Heart left ventricle (tissue), 16 donors: ENCODE measurements at regions of chr7 and their contacts with region 1.

Region 1: DNA sequence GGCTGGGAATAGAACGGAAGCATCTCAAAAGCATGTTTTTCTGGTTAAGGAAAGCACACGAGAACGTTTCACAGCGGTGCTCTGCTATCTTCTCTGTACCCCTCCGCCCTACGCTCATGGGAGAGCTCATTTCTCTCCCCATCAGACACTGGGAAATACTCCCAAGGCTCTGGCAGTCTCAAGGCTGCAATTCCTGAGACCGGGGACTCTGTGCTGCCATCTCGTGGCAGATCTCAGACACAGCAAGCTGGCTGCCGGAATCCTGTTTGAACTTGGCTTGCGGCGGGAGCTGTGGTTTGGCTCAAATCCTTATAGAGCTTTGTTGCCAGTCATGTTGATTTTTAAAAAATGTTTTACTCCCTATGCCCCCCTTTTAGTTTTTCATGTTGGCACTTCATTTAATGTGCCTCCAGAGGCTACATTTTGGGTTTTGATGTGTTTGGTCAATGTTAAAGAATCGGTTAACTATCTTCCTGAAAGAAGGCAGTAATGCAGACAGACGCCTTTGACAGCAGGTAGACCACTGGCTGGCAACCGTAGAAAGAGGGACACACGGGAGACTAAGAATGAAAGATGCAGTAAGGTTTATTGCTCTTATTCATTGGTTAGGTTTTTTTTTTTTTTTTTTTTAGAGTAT is 27.6 kb downstream of the BMPER start:
- DNase-seq: peak; percentile 75 to 85 (median 76)
- ATAC-seq: peak; percentile 55 to 94 (median 88)
- H3K4me3 ChIP-seq: peak overlapping the region in 8 of 12 donors; percentile 16 to 46 (median 32)
- H3K27ac ChIP-seq: peak overlapping the region in 2 of 12 donors; percentile 39 to 43
- H3K4me1 ChIP-seq: peaks cover 0 to 7% (median 0%) of the 10 kb centered on the region in 12 donors
- H3K27me3 ChIP-seq: no peaks in the 10 kb centered on the region
- CTCF ChIP-seq: peak; percentile 92 to 98 (median 96)
- POLR2A ChIP-seq: no peak

Region 2: DNA sequence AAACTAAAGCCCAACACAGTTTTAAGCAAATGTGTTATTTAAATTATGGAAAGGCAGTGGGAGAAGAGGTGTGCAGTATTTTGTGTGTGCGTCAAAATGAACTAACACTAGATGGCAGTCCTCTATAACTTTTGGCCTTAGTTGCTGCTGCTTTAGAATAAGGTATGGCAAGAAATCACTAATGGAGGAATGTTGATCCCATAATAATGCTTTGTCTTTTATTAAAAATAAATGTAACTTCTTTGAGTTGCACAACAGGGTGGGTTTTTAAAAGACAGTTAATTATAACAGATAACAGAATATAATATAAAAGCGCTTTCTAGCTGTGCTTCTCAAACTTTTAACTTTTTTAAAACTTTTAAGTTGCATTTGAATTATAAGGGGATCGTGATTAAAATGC is 747.2 kb before region 1 on chr7:
- intact Hi-C with region 1: loop called in 5 of 10 experiments (anchors 5 to 10 kb)
- DNase-seq: no peak
- ATAC-seq: peak in 2 of 4 donors; percentile 49 to 51
- H3K4me3 ChIP-seq: no peak overlapping the region
- H3K27ac ChIP-seq: no peak overlapping the region
- H3K4me1 ChIP-seq: peaks cover 0 to 5% (median 0%) of the 10 kb centered on the region in 12 donors
- H3K27me3 ChIP-seq: no peaks in the 10 kb centered on the region
- CTCF ChIP-seq: peak; percentile 36 to 67 (median 57)
- POLR2A ChIP-seq: no peak

Region 3: GRCh38 chr7:33243319-33243881 is 689.5 kb before region 1 on chr7:
- intact Hi-C with region 1: loop called in 8 of 10 experiments (anchors 2 to 10 kb)
- DNase-seq: no peak
- ATAC-seq: peak in 2 of 4 donors; percentile 51 to 64
- H3K4me3 ChIP-seq: no peak overlapping the region
- H3K27ac ChIP-seq: no peak overlapping the region
- H3K4me1 ChIP-seq: peaks cover 0 to 2% (median 0%) of the 10 kb centered on the region in 12 donors
- H3K27me3 ChIP-seq: no peaks in the 10 kb centered on the region
- CTCF ChIP-seq: peak; percentile 31 to 78 (median 70)
- POLR2A ChIP-seq: no peak

Region 4: DNA sequence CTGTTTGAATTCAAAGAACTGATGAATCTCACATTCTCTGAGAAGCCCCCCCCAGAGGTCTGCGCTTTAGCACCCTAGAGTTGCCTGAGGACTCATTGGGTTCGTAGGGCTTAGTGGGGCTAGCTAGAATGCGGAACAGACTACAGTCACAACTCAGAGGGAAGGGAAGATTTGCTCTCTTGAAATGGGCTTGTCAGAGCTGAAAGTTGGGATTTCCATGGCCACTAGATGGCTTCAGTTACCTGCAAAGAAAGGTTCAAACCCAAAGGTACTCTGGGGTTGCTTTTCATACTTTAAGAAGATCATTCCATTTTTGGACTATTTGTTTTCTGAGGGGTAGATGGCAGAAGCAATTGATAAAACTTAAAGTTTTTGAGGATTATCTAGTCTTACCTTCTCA is 598.6 kb before region 1 on chr7:
- intact Hi-C with region 1: loop called in 1 of 10 experiments (anchors 10 kb)
- DNase-seq: no peak
- ATAC-seq: no peak
- H3K4me3 ChIP-seq: no peak overlapping the region
- H3K27ac ChIP-seq: no peak overlapping the region
- H3K4me1 ChIP-seq: no peaks in the 10 kb centered on the region
- H3K27me3 ChIP-seq: no peaks in the 10 kb centered on the region
- CTCF ChIP-seq: peak in 6 of 12 donors; percentile 6 to 31 (median 18)
- POLR2A ChIP-seq: no peak

Region 5: GRCh38 chr7:33459340-33459751 is 473.6 kb before region 1 on chr7:
- intact Hi-C with region 1: loop called in 2 of 10 experiments (anchors 10 kb)
- DNase-seq: peak in 1 of 5 donors; percentile 22
- ATAC-seq: peak; percentile 58 to 86 (median 74)
- H3K4me3 ChIP-seq: peak overlapping the region in 1 of 12 donors; percentile 16
- H3K27ac ChIP-seq: no peak overlapping the region
- H3K4me1 ChIP-seq: no peaks in the 10 kb centered on the region
- H3K27me3 ChIP-seq: no peaks in the 10 kb centered on the region
- CTCF ChIP-seq: peak; percentile 23 to 55 (median 44)
- POLR2A ChIP-seq: no peak

Region 6: GRCh38 chr7:33757562-33758165 is 175.3 kb before region 1 on chr7:
- intact Hi-C with region 1: loop called in 7 of 10 experiments (anchors 1 to 10 kb)
- DNase-seq: no peak
- ATAC-seq: no peak
- H3K4me3 ChIP-seq: no peak overlapping the region
- H3K27ac ChIP-seq: no peak overlapping the region
- H3K4me1 ChIP-seq: peaks cover 0 to 19% (median 7%) of the 10 kb centered on the region in 12 donors
- H3K27me3 ChIP-seq: no peaks in the 10 kb centered on the region
- CTCF ChIP-seq: peak; percentile 48 to 83 (median 71)
- POLR2A ChIP-seq: no peak

Region 7: DNA sequence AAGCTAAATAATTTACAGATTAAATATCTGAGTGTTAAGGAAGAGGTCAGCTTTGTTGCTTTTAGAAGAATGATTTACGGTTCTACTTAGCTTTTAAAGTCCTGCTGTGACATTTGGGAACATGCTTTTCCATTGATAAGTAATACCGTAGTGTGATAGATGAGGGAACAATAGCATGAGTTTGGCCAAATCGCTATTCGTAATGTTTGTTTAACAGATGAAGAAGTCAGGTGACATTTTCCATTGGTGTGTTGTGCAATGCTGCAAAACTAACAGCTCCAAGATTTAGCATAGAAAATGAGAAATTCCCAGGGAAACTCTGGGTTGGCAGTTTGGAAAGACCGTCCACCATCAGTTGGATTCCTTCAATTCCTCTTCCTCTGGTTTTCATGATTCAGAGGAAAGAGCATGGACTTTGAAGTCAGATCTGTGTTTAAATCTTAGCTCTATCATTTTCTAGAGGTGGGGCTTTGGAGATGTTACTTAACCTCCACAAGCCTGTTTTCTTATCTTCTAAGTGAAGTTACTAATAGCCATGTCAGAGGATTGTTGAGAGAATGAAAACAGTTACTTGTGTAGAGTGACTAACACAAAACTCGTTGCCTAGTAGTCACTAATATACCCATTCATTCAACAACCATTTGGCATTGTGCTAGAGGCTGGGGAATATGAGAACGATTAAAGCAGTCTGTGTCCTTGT is 168.0 kb before region 1 on chr7:
- intact Hi-C with region 1: loop called in 2 of 10 experiments (anchors 2 to 10 kb)
- DNase-seq: no peak
- ATAC-seq: peak in 3 of 4 donors; percentile 33 to 58 (median 52)
- H3K4me3 ChIP-seq: no peak overlapping the region
- H3K27ac ChIP-seq: no peak overlapping the region
- H3K4me1 ChIP-seq: peaks cover 0 to 12% (median 0%) of the 10 kb centered on the region in 12 donors
- H3K27me3 ChIP-seq: no peaks in the 10 kb centered on the region
- CTCF ChIP-seq: no peak
- POLR2A ChIP-seq: no peak

Region 8: DNA sequence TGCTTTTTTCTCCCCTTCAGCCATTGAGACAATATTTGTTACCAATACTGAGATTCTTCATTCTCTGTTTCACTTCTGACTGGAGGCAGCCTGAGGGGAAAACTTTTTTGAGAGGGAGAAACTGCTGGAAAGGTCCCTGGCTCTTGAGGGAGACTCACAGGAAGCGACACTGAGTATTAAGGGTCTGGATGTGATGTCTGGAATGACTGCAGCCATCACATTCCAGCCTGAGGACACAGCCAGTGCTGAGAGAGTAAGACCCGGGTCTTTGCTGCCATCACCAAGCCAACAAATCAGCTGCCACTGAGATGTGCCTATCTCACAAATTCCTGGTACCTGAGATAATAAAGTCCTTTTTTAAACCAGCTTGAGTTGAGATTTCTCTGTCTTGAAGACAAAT is 946.9 kb after region 1 on chr7:
- intact Hi-C with region 1: no loop called
- DNase-seq: no peak
- ATAC-seq: no peak
- H3K4me3 ChIP-seq: no peak overlapping the region
- H3K27ac ChIP-seq: no peak overlapping the region
- H3K4me1 ChIP-seq: no peaks in the 10 kb centered on the region
- H3K27me3 ChIP-seq: no peaks in the 10 kb centered on the region
- CTCF ChIP-seq: no peak
- POLR2A ChIP-seq: no peak

Region 9: GRCh38 chr7:35241884-35242283 is 1308.9 kb after region 1 on chr7:
- intact Hi-C with region 1: no loop called
- DNase-seq: peak in 1 of 5 donors; percentile 28
- ATAC-seq: peak in 3 of 4 donors; percentile 37 to 66 (median 47)
- H3K4me3 ChIP-seq: peak overlapping the region in 1 of 12 donors; percentile 14
- H3K27ac ChIP-seq: peak overlapping the region in 3 of 12 donors; percentile 6 to 35 (median 14)
- H3K4me1 ChIP-seq: peaks cover 0 to 87% (median 28%) of the 10 kb centered on the region in 12 donors
- H3K27me3 ChIP-seq: peaks cover 0 to 18% (median 2%) of the 10 kb centered on the region in 9 donors
- CTCF ChIP-seq: peak in 8 of 12 donors; percentile 7 to 42 (median 24)
- POLR2A ChIP-seq: no peak